ENCODE measurements at regions of chr9 and their contacts with region 1.

Region 1: GRCh38 chr9:34271265-34272006 is 57.6 kb downstream of the KIF24 start:
- DNase-seq: no peak
- ATAC-seq: no peak
- H3K4me3 ChIP-seq: no peak overlapping the region
- H3K4me3 Mint-ChIP-seq: no peak overlapping the region
- H3K27ac ChIP-seq: no peak overlapping the region
- H3K27ac Mint-ChIP-seq: no peak overlapping the region
- H3K4me1 ChIP-seq: no peaks in the 10 kb centered on the region
- H3K4me1 Mint-ChIP-seq: no peaks in the 10 kb centered on the region
- H3K27me3 ChIP-seq: no peaks in the 10 kb centered on the region
- H3K27me3 Mint-ChIP-seq: no peaks in the 10 kb centered on the region

Region 2: DNA sequence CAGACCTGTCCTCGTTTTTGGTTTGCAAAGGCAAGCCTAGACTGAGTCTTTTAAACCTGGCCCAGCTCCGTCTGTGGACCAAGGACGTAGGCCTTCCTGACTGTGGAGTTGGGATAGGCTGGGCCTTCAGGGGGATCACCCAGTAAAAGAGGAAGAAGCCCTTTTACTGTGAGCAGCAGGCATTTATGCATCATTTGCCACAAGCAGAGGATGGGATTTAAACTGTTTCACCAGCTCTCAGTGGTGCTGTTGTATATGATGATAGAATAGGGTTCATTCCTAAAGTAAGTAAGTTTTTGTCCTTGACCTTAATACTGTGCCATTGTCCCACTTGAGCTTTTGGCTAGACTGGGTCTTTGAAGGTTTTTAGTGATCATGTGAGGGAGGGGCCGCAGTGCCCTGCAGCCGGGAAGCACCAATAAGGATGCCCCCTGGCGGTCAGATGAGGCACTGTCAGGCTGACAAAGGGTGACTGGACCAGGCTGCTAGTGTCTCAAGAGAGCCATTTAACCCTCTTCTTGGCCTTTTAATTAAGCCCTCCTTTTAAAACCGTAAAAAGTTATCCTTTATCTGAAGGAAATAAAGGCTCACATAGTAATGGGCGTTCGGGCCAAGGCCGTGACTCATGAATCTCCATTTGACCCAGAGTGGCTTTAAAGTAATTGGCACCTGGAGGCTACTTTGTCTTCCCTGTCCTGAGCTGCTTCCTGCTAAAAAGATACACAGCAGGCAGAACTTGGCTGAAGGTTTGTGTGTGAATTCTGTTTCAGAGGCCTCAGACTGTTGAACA is 18.6 kb before region 1 on chr9:
- CTCF ChIA-PET with region 1: no interaction called
- POLR2A ChIA-PET with region 1: no interaction called
- DNase-seq: peak; percentile 14 to 79 (median 55)
- ATAC-seq: peak in 3 of 4 experiments; percentile 49 to 60 (median 60)
- H3K4me3 ChIP-seq: no peak overlapping the region
- H3K4me3 Mint-ChIP-seq: no peak overlapping the region
- H3K27ac ChIP-seq: no peak overlapping the region
- H3K27ac Mint-ChIP-seq: peak overlapping the region; percentile 24 to 55
- H3K4me1 ChIP-seq: peaks cover 8 to 24% of the 10 kb centered on the region in 2 experiments
- H3K4me1 Mint-ChIP-seq: peaks cover 18 to 27% (median 25%) of the 10 kb centered on the region in 3 donors
- H3K27me3 ChIP-seq: no peaks in the 10 kb centered on the region
- H3K27me3 Mint-ChIP-seq: no peaks in the 10 kb centered on the region

Region 3: DNA sequence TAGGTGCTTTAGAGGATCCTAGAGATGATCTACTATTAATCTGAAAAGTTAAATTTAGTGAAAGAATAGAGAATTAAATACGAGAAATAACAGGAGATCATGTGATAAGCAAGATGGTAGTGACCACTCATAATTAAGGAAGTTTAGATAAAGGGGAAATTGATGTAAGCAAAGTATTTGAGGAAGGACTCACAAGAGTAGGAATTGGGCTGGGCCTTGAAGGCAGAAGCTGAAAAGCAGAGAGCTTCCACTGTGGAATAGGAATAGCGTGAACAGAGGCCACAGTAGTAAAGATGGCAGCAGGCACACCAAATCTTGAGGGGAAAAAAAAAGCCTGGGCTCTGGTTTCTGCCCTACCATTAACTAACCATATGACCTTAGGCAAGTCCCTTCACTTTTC is 19.6 kb after region 1 on chr9:
- CTCF ChIA-PET with region 1: interaction called, 3 to 11 read pairs
- POLR2A ChIA-PET with region 1: no interaction called
- DNase-seq: no peak
- ATAC-seq: no peak
- H3K4me3 ChIP-seq: no peak overlapping the region
- H3K4me3 Mint-ChIP-seq: no peak overlapping the region
- H3K27ac ChIP-seq: no peak overlapping the region
- H3K27ac Mint-ChIP-seq: no peak overlapping the region
- H3K4me1 ChIP-seq: no peaks in the 10 kb centered on the region
- H3K4me1 Mint-ChIP-seq: no peaks in the 10 kb centered on the region
- H3K27me3 ChIP-seq: no peaks in the 10 kb centered on the region
- H3K27me3 Mint-ChIP-seq: no peaks in the 10 kb centered on the region

Region 4: GRCh38 chr9:34328987-34329832 is 57.8 kb after region 1 on chr9 and contains the starts of genes KIF24 and NUDT2:
- CTCF ChIA-PET with region 1: no interaction called
- POLR2A ChIA-PET with region 1: no interaction called
- DNase-seq: peak; percentile 78 to 99 (median 95)
- ATAC-seq: peak; percentile 92 to 95 (median 94)
- H3K4me3 ChIP-seq: peak within 1 kb of the TSS; percentile 84 to 92
- H3K4me3 Mint-ChIP-seq: peak within 1 kb of the TSS; percentile 93 to 98 (median 93)
- H3K27ac ChIP-seq: peak within 1 kb of the TSS; percentile 80
- H3K27ac Mint-ChIP-seq: peak within 1 kb of the TSS; percentile 92 to 93
- H3K4me1 ChIP-seq: peaks cover 9 to 15% of the 10 kb centered on the region in 2 experiments
- H3K4me1 Mint-ChIP-seq: peaks cover 27 to 40% (median 39%) of the 10 kb centered on the region in 3 donors
- H3K27me3 ChIP-seq: no peaks in the 10 kb centered on the region
- H3K27me3 Mint-ChIP-seq: no peaks in the 10 kb centered on the region
- total RNA-seq, gene KIF24: 0.15 to 0.41 (median 0.23) TPM
- total RNA-seq, gene NUDT2: 9.9 to 22.7 (median 17.4) TPM

Region 5: GRCh38 chr9:34777666-34778065 is 506.2 kb after region 1 on chr9:
- CTCF ChIA-PET with region 1: no interaction called
- POLR2A ChIA-PET with region 1: no interaction called
- DNase-seq: no peak
- ATAC-seq: no peak
- H3K4me3 ChIP-seq: no peak overlapping the region
- H3K4me3 Mint-ChIP-seq: no peak overlapping the region
- H3K27ac ChIP-seq: no peak overlapping the region
- H3K27ac Mint-ChIP-seq: no peak overlapping the region
- H3K4me1 ChIP-seq: no peaks in the 10 kb centered on the region
- H3K4me1 Mint-ChIP-seq: no peaks in the 10 kb centered on the region
- H3K27me3 ChIP-seq: peaks cover 0 to 10% of the 10 kb centered on the region in 2 experiments
- H3K27me3 Mint-ChIP-seq: peaks cover 28 to 34% of the 10 kb centered on the region in 2 donors

Measured in T-cell (primary cell).